A549 (cell line): ENCODE measurements at regions of chr6 and their contacts with region 1.

Region 1: DNA sequence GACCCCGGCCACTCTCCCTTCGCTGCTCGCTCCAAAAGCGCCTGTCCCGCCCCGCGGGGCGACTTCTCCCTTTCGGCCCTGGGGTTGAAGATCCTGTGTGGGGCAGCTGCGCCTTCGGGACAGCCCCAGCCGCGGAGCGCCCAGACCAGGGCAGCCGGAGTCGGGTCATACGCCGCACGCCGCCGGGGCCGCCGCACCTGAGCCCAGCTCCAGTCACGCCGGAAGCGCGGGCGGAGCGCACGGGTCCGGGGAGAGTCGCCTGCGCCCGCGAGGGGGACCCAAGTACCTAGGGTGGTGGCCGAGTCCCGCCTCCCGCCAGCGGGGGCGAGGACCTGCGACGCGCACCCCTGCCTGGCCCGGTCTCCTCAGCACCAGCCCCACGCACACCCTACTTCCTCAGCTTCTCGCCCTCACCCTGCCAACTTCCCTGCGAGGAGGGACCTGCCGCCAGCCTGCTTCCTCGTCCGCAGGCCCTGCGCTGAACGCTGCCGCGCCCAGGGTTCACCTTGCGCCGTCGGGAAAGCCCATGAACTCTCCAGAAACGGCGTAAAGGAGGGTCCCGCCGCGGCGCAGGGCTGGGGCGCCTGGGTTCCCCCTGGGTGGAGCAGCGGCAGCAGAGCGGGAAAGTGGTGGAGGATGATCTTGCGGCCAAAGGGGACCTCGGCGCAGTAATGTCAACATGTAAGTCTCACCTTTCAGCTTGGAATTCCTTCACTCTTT is at the start of gene ADGRG6:
- DNase-seq: peak; percentile 7 to 75
- ATAC-seq: peak; percentile 79 to 82
- H3K4me3 ChIP-seq: peak within 1 kb of the TSS; percentile 81
- H3K27ac ChIP-seq: peak within 1 kb of the TSS; percentile 95 to 97
- H3K4me1 ChIP-seq: peaks cover 51% of the 10 kb centered on the region
- CTCF ChIP-seq: peak; percentile 19; the same call in 1 of the 3 replicates
- EP300 ChIP-seq: no peak
- POLR2A ChIP-seq: peak; percentile 6; the same call in 1 of the 2 replicates
- RAD21 ChIP-seq: peak in 1 of 2 experiments; percentile 50; a peak in 2 of 5 replicates
- polyA plus RNA-seq, gene ADGRG6: 176 and 181 TPM in 2 replicates

Region 2: DNA sequence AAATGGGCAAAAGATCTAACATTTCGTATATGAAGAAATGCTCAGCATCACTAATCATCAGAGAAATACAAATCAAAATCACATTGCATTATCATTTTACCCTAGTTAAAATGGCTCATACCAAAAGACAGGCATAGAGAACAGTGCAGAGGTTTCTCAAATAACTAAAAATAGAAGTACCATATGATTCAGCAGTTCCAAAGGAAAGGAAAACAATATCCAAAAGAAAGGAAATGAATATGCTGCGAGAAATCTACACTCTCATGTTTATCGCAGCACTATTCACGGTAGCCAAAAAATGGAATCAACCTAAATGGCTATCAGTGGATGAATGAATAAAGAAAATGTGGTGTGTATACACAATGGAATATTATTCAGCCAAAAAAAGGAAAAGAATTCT is 91.2 kb before region 1 on chr6:
- CTCF ChIA-PET with region 1: no interaction called
- POLR2A ChIA-PET with region 1: no interaction called
- DNase-seq: no peak
- ATAC-seq: no peak
- H3K4me3 ChIP-seq: no peak overlapping the region
- H3K27ac ChIP-seq: no peak overlapping the region
- H3K4me1 ChIP-seq: no peaks in the 10 kb centered on the region
- CTCF ChIP-seq: no peak
- EP300 ChIP-seq: no peak
- POLR2A ChIP-seq: no peak
- RAD21 ChIP-seq: no peak

Region 3: DNA sequence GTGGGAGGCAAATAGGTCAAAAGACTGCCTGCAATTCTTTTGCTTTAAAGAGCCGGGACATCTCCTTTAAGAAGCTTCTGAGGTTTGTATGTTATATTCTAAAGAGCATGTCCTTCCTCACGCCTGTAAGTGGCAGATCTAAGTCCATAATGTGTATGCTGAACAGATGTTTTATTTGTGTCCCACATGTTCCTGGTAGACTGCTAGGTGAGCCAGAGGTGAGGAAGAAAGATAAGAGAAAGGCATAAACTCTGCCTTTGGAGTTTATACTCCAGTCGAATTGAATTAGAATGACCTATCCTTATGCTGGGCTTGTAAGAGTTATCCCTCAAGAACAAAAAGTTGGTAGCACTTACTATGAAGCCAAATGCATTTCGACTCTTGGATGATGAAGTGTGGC is 27.2 kb before region 1 on chr6:
- CTCF ChIA-PET with region 1: no interaction called
- POLR2A ChIA-PET with region 1: no interaction called
- DNase-seq: no peak
- ATAC-seq: no peak
- H3K4me3 ChIP-seq: no peak overlapping the region
- H3K27ac ChIP-seq: 0 out of 6 replicates have a peak overlapping the region, but pooled peaks of 1 of the 2 experiments have one; percentile 19
- H3K4me1 ChIP-seq: peaks cover 21% of the 10 kb centered on the region
- CTCF ChIP-seq: no peak
- EP300 ChIP-seq: no peak
- POLR2A ChIP-seq: no peak
- RAD21 ChIP-seq: no peak

Region 4: GRCh38 chr6:142378138-142378875 is 76.5 kb after region 1 on chr6:
- CTCF ChIA-PET with region 1: interaction called, 12 read pairs
- POLR2A ChIA-PET with region 1: interaction called, 35 read pairs
- DNase-seq: peak in 1 of 2 experiments; percentile 83
- ATAC-seq: peak; percentile 51 to 58; a peak in 4 of 6 replicates
- H3K4me3 ChIP-seq: no peak overlapping the region
- H3K27ac ChIP-seq: peak overlapping the region; percentile 85 to 94
- H3K4me1 ChIP-seq: peaks cover 87% of the 10 kb centered on the region
- CTCF ChIP-seq: no peak
- EP300 ChIP-seq: peak; percentile 40 to 71; a peak in 2 of 5 replicates
- POLR2A ChIP-seq: no peak
- RAD21 ChIP-seq: no peak